ENCODE measurements at regions of chr22 and their contacts with region 1.

Region 1: GRCh38 chr22:31399211-31400028 is at the start of gene DRG1:
- DNase-seq: peak; percentile 89
- ATAC-seq: peak; percentile 100
- H3K4me3 ChIP-seq: peak within 1 kb of the TSS; percentile 95 to 97
- H3K27ac ChIP-seq: peak within 1 kb of the TSS; percentile 66
- H3K4me1 ChIP-seq: peaks cover 7 to 14% of the 10 kb centered on the region in 2 experiments
- H3K27me3 ChIP-seq: no peaks in the 10 kb centered on the region
- CTCF ChIP-seq: no peak
- POLR2A ChIP-seq: peak; percentile 95
- RAD21 ChIP-seq: no peak
- total RNA-seq, gene DRG1: 68.2 TPM

Region 2: DNA sequence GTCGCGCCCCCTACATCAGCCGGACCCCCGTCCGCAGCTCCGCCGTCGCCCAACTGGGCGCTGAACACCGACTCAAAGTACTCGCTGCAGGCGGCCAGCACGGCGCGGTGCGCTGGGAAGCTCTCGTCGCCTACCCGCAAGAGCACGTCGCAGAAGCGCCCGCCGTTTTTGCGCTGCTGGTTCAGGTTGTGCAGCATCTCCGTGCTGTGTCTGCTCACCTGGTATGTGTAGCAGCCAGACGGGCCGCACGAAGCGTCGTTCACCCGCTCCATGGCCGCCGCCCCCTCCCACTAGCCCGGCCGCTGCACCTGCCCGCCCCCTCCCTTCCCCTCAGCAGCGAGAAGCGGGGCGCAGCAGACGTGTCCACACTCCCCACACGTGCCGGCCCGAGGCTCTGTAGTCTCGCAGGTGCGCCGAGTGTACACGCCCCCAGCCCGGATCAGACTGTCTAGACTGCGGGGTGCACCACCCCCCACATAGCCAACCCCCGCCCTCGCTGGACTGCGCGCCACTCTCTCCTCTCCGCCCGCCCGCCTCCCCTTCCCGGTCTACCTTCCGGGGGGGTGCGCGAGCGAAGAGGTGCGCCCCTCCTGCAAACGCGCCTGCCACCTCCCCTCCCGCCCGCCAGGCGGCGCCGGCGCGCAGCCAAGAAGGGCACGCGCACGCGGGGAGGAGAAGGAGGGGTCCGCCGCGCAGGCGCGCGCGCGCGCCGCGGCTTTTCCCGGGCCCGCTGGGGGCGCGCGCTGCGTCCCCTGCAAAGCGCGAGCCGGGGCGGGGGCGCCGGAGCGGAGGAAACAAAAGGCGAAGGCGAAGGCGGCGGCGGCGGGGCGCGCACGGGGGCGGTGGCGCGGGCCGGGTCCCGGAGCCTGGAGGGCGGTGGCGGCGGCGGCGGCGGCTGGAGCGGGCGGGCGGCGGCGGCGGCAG is 53.8 kb before region 1 on chr22:
- CTCF ChIA-PET with region 1: no interaction called
- POLR2A ChIA-PET with region 1: interaction called, 3 read pairs
- RAD21 ChIA-PET with region 1: no interaction called
- intact Hi-C with region 1: loop called (anchors 2 kb)
- DNase-seq: peak; percentile 68
- ATAC-seq: peak; percentile 61
- H3K4me3 ChIP-seq: peak overlapping the region; percentile 74 to 80
- H3K27ac ChIP-seq: peak overlapping the region; percentile 80
- H3K4me1 ChIP-seq: peaks cover 30 to 47% of the 10 kb centered on the region in 2 experiments
- H3K27me3 ChIP-seq: no peaks in the 10 kb centered on the region
- CTCF ChIP-seq: peak; percentile 49 to 82 (median 71); a peak in 5 of 6 replicates
- POLR2A ChIP-seq: no peak
- RAD21 ChIP-seq: peak; percentile 53